Naive thymus-derived CD4-positive, alpha-beta T cell (primary cell): ENCODE measurements at regions of chr2 and their contacts with region 1.

Region 1: GRCh38 chr2:96359310-96359709 is 23.7 kb downstream of the NCAPH start:
- DNase-seq: peak in 8 of 9 donors; percentile 26 to 64 (median 46)
- ATAC-seq: peak; percentile 83
- H3K4me3 ChIP-seq: no peak overlapping the region
- H3K4me3 Mint-ChIP-seq: no peak overlapping the region
- H3K27ac ChIP-seq: no peak overlapping the region
- H3K27ac Mint-ChIP-seq: peak overlapping the region in 2 of 9 donors; percentile 33 to 64
- H3K4me1 ChIP-seq: peaks cover 0 to 12% of the 10 kb centered on the region in 2 donors
- H3K4me1 Mint-ChIP-seq: peaks cover 0 to 10% (median 1%) of the 10 kb centered on the region in 7 donors
- H3K27me3 ChIP-seq: no peaks in the 10 kb centered on the region
- H3K27me3 Mint-ChIP-seq: no peaks in the 10 kb centered on the region

Region 2: GRCh38 chr2:96413323-96413722 is 54.0 kb after region 1 on chr2:
- CTCF ChIA-PET with region 1: no interaction called
- POLR2A ChIA-PET with region 1: no interaction called
- intact Hi-C with region 1: loop called in 1 of 2 experiments (anchors 2 kb)
- DNase-seq: no peak
- ATAC-seq: no peak
- H3K4me3 ChIP-seq: no peak overlapping the region
- H3K4me3 Mint-ChIP-seq: no peak overlapping the region
- H3K27ac ChIP-seq: no peak overlapping the region
- H3K27ac Mint-ChIP-seq: peak overlapping the region in 2 of 9 donors; percentile 62 to 74
- H3K4me1 ChIP-seq: peaks cover under 1 to 4% of the 10 kb centered on the region in 2 donors
- H3K4me1 Mint-ChIP-seq: peaks cover 3 to 20% (median 17%) of the 10 kb centered on the region in 7 donors
- H3K27me3 ChIP-seq: no peaks in the 10 kb centered on the region
- H3K27me3 Mint-ChIP-seq: no peaks in the 10 kb centered on the region

Region 3: DNA sequence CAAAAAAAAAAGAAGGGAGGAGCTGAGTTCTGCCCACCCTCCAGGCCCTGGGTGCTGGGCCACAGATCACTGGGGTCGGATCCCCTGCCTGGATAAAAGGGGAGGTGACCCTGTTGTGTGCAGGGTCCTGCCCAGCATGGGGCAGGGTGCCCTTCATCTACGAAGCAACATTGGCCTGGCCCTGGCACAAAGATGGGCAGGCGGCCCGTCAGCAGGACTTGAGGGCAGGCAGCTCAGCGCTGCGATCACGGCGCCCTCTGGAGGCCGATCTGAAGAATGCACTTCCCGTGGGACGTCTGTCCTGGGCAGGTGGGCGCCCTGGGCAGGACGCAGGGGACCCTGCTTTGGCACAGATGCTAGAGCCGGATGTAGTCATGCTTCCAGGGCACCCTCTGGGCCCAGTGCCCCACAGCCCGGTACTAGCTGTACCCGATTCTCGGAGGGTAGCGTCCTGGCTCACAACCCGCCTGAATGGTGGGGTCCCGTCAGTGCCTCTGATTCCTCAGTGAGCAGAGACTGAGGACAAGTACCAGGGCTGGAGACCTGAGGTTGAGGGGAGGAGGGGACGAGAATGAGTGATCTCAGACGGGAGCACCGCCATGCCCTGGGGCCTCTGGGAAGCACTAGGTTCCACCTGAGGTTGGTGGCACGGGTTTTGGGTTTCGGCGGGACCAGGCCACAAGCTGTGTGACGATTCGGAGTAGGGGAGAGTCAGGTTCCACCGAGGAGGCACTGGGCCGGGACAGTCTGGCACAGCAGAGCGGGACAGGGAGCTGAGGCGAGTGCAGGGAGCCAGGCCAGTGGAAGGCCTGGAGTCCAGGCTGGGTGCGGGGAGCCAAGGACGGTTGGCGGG is 195.2 kb after region 1 on chr2:
- CTCF ChIA-PET with region 1: interaction called, 6 read pairs
- POLR2A ChIA-PET with region 1: no interaction called
- intact Hi-C with region 1: loop called in 1 of 2 experiments (anchors 1 kb)
- DNase-seq: peak; percentile 46 to 80 (median 73)
- ATAC-seq: peak; percentile 76
- H3K4me3 ChIP-seq: no peak overlapping the region
- H3K4me3 Mint-ChIP-seq: peak overlapping the region in 7 of 10 donors; percentile 3 to 67 (median 32)
- H3K27ac ChIP-seq: no peak overlapping the region
- H3K27ac Mint-ChIP-seq: peak overlapping the region; percentile 33 to 88 (median 71)
- H3K4me1 ChIP-seq: peaks cover 4 to 7% of the 10 kb centered on the region in 2 donors
- H3K4me1 Mint-ChIP-seq: peaks cover 0 to 30% (median 15%) of the 10 kb centered on the region in 7 donors
- H3K27me3 ChIP-seq: no peaks in the 10 kb centered on the region
- H3K27me3 Mint-ChIP-seq: peaks cover 0 to 2% (median 0%) of the 10 kb centered on the region in 5 donors

Region 4: GRCh38 chr2:96801005-96801785 is 441.9 kb after region 1 on chr2:
- CTCF ChIA-PET with region 1: no interaction called
- POLR2A ChIA-PET with region 1: no interaction called
- intact Hi-C with region 1: loop called in 1 of 2 experiments (anchors 1 kb)
- DNase-seq: peak; percentile 41 to 72 (median 63)
- ATAC-seq: peak; percentile 94
- H3K4me3 ChIP-seq: no peak overlapping the region
- H3K4me3 Mint-ChIP-seq: no peak overlapping the region
- H3K27ac ChIP-seq: no peak overlapping the region
- H3K27ac Mint-ChIP-seq: no peak overlapping the region
- H3K4me1 ChIP-seq: peaks cover 10 to 20% of the 10 kb centered on the region in 2 donors
- H3K4me1 Mint-ChIP-seq: peaks cover under 1 to 4% (median 2%) of the 10 kb centered on the region in 7 donors
- H3K27me3 ChIP-seq: no peaks in the 10 kb centered on the region
- H3K27me3 Mint-ChIP-seq: no peaks in the 10 kb centered on the region